Activated B cell treated with CpG ODN at 0.5 μM for 24 hours (primary cell): ENCODE measurements at regions of chr9 and their contacts with region 1.

Region 1: DNA sequence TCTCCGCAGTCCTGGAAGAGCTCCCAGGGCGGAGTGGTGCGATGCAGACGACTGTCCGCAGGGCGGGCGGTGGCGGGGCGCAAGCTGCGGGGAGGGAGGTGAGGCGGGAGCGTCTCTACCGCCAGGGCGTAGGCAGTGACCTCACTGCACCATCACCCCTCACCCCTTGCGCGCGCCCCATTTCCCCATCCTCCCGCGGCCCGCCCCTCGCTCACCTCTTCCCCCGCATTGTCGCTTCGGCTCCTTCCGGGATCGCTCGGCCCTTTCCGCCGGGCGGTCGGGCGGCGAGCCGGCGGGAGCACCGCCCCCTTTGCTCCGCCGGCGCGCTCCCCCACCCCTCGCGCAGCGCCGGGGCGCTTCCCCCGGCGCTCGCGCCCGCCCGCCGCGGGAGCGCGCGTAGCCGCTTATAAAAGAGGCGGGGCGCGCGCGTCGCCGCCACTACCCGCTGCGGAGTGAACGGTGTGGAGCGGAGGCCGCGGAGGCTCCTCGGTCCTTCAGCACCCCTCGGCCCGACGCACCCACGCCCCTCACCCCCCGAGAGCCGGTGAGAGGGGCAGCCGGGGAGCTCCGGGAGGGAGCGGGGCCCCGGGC is at the start of gene SPTAN1:
- DNase-seq: peak; percentile 94
- ATAC-seq: peak; percentile 92
- H3K4me3 Mint-ChIP-seq: peak within 1 kb of the TSS; percentile 90
- H3K27ac Mint-ChIP-seq: peak within 1 kb of the TSS; percentile 90
- H3K4me1 Mint-ChIP-seq: peaks cover 22% of the 10 kb centered on the region
- H3K27me3 Mint-ChIP-seq: no peaks in the 10 kb centered on the region
- CTCF ChIP-seq: no peak
- total RNA-seq, gene SPTAN1: 208 and 237 TPM in 2 replicates

Region 2: DNA sequence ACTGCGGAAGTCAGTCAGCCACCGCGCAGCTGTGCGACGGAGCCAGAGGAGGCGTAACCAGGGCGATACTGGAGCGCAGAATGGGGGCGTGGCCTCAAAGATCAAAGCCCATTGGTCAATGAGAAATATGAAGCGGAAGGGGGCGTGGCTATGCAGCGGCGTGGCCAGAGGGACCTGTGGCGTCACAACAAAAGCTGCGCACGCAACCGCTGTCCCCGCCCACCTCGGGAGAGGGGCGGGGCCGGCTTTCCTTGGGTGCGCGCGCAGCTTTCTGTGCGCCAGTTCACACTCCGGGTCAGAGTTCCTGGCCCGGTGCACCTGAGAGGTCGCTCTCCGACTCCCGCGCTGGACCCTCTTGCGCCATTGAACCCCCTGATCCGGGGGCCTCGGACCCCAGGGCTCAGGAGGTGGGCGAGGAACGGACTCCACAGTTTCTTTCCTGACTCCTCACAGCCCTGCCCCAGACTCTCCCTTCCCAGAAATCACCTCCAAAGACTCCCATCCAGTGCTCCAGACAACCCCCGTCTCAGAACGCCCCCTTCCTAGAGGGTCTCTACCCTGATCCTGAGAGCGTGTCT is 276.2 kb before region 1 on chr9 and contains the starts of genes GOLGA2 and SWI5:
- CTCF ChIA-PET with region 1: no interaction called
- POLR2A ChIA-PET with region 1: interaction called, 4 read pairs
- intact Hi-C with region 1: loop called (anchors 10 kb)
- DNase-seq: peak; percentile 96
- ATAC-seq: peak; percentile 95
- H3K4me3 Mint-ChIP-seq: peak within 1 kb of the TSS; percentile 97
- H3K27ac Mint-ChIP-seq: peak within 1 kb of the TSS; percentile 92
- H3K4me1 Mint-ChIP-seq: peaks cover 27% of the 10 kb centered on the region
- H3K27me3 Mint-ChIP-seq: no peaks in the 10 kb centered on the region
- CTCF ChIP-seq: no peak
- total RNA-seq, gene GOLGA2: 46.0 and 53.5 TPM in 2 replicates
- total RNA-seq, gene SWI5: 7.2 and 10.4 TPM in 2 replicates

Region 3: GRCh38 chr9:128420060-128420650 is 132.1 kb before region 1 on chr9:
- CTCF ChIA-PET with region 1: no interaction called
- POLR2A ChIA-PET with region 1: interaction called, 6 read pairs
- intact Hi-C with region 1: loop called (anchors 1 kb)
- DNase-seq: peak; percentile 81
- ATAC-seq: peak; percentile 89
- H3K4me3 Mint-ChIP-seq: peak overlapping the region; percentile 75
- H3K27ac Mint-ChIP-seq: no peak overlapping the region
- H3K4me1 Mint-ChIP-seq: peaks cover 8% of the 10 kb centered on the region
- H3K27me3 Mint-ChIP-seq: peaks cover 19% of the 10 kb centered on the region
- CTCF ChIP-seq: no peak

Region 4: GRCh38 chr9:128504485-128505413 is 47.5 kb before region 1 on chr9 and contains the start of gene GLE1:
- CTCF ChIA-PET with region 1: no interaction called
- POLR2A ChIA-PET with region 1: interaction called, 21 read pairs
- intact Hi-C with region 1: loop called (anchors 1 kb)
- DNase-seq: peak; percentile 99
- ATAC-seq: peak; percentile 95
- H3K4me3 Mint-ChIP-seq: peak within 1 kb of the TSS; percentile 99
- H3K27ac Mint-ChIP-seq: peak within 1 kb of the TSS; percentile 98
- H3K4me1 Mint-ChIP-seq: peaks cover 24% of the 10 kb centered on the region
- H3K27me3 Mint-ChIP-seq: no peaks in the 10 kb centered on the region
- CTCF ChIP-seq: no peak
- total RNA-seq, gene GLE1: 28.8 and 31.8 TPM in 2 replicates

Region 5: GRCh38 chr9:128688512-128689292 is 136.5 kb after region 1 on chr9 and contains the start of gene SET:
- CTCF ChIA-PET with region 1: no interaction called
- POLR2A ChIA-PET with region 1: interaction called, 5 read pairs
- intact Hi-C with region 1: loop called (anchors 1 kb)
- DNase-seq: peak; percentile 97
- ATAC-seq: peak; percentile 81
- H3K4me3 Mint-ChIP-seq: peak within 1 kb of the TSS; percentile 98
- H3K27ac Mint-ChIP-seq: peak within 1 kb of the TSS; percentile 87
- H3K4me1 Mint-ChIP-seq: peaks cover 68% of the 10 kb centered on the region
- H3K27me3 Mint-ChIP-seq: no peaks in the 10 kb centered on the region
- CTCF ChIP-seq: no peak
- total RNA-seq, gene SET: 762 and 801 TPM in 2 replicates

Region 6: GRCh38 chr9:128742401-128742800 is 190.2 kb after region 1 on chr9:
- CTCF ChIA-PET with region 1: no interaction called
- POLR2A ChIA-PET with region 1: no interaction called
- intact Hi-C with region 1: no loop called
- DNase-seq: no peak
- ATAC-seq: no peak
- H3K4me3 Mint-ChIP-seq: no peak overlapping the region
- H3K27ac Mint-ChIP-seq: no peak overlapping the region
- H3K4me1 Mint-ChIP-seq: no peaks in the 10 kb centered on the region
- H3K27me3 Mint-ChIP-seq: no peaks in the 10 kb centered on the region
- CTCF ChIP-seq: no peak

Region 7: DNA sequence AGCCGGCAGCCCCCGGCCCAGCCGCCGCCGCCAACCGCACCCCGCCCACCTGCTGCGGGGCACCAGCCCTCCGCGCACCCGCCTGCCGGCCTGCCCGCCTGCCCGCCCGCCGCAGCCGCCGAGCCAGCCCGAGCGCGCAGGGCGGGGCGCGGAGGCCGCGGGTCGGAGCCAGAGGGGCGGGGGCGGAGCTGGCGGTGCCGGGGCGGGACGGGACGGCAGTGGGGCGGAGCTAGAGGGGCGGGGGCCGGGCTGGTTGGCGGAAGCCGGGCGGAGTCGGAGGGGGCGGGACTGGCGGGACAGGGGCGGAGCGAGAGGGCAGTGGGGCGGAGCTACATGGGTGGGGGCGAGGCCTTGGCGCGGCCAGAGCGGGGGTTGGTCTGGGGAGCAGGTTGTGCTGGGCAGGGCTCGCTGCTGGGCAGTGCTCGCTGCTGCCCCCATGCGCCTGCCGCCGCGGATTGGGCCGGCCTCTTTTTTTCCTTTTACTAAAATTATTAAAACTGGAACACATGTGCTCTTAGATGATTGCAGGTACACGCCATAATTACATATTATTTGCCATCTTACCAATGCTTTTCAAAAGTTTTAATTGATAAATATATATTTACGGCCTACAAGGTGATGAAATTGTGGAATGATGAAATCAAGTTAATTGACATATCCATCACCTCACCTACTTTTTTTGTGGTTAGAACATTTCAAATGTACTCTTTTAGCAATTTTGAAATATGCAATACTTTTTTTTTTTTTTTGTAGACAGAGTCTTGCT is 476.1 kb after region 1 on chr9 and contains the start of gene SH3GLB2:
- CTCF ChIA-PET with region 1: no interaction called
- POLR2A ChIA-PET with region 1: interaction called, 12 read pairs
- intact Hi-C with region 1: loop called (anchors 2 kb)
- DNase-seq: peak; percentile 93
- ATAC-seq: peak; percentile 95
- H3K4me3 Mint-ChIP-seq: peak within 1 kb of the TSS; percentile 85
- H3K27ac Mint-ChIP-seq: peak within 1 kb of the TSS; percentile 66
- H3K4me1 Mint-ChIP-seq: peaks cover 19% of the 10 kb centered on the region
- H3K27me3 Mint-ChIP-seq: no peaks in the 10 kb centered on the region
- CTCF ChIP-seq: no peak
- total RNA-seq, gene SH3GLB2: 60.4 and 62.9 TPM in 2 replicates